ENCODE measurements at regions of chr17 and their contacts with region 1.

Region 1: DNA sequence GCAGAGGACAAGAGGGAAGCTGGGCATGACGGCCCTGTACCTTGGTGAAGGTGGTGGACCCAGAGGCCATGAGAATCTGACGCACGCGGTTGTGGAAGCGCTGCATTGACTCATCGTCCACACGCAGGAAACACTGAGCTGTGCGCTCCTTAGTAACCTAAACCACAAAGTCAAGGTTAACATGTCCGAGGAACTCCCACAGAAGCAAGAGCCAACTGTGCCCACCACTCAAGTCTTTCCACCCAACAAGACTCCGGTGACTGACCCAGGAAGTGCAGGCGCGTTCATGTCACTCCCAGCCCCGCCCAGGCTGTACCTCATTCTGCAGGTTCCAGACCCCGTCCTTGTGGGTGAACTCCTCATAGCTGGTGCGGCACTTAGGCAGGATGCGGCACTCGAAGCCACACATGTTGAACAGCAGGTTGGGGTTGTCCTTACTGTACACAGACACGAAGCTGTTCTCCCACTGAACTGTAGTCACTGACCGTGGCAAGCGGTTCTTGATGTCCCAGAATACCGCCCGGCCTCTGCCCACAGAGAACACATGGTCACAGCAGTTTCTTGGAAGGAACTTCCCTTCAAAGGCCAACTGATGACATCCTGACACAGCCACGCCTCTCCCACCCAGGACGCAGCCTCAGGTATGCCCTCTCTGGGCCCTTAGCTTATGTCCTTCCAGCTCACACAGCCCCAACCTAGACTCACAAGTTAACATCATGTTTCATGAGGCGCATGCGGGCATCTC is 11.5 kb downstream of the PRPF8 start:
- DNase-seq: no peak
- H3K4me3 ChIP-seq: no peak overlapping the region
- H3K27ac ChIP-seq: no peak overlapping the region
- H3K4me1 ChIP-seq: peaks cover 0 to 7% of the 10 kb centered on the region in 2 donors
- H3K27me3 ChIP-seq: no peaks in the 10 kb centered on the region
- CTCF ChIP-seq: no peak
- POLR2A ChIP-seq: no peak

Region 2: GRCh38 chr17:1716076-1716995 is 43.1 kb after region 1 on chr17:
- intact Hi-C with region 1: loop called (anchors 5 kb)
- DNase-seq: peak; percentile 100
- H3K4me3 ChIP-seq: peak overlapping the region; percentile 82 to 99 (median 94)
- H3K27ac ChIP-seq: peak overlapping the region; percentile 98 to 100 (median 99)
- H3K4me1 ChIP-seq: peaks cover 12 to 34% of the 10 kb centered on the region in 2 donors
- H3K27me3 ChIP-seq: no peaks in the 10 kb centered on the region
- CTCF ChIP-seq: peak in 1 of 6 experiments; percentile 32
- POLR2A ChIP-seq: peak; percentile 96 to 100

Measured in thyroid gland (tissue), 4 donors.